GM13976 (cell line): ENCODE measurements at regions of chr20 and their contacts with region 1.

Region 1: DNA sequence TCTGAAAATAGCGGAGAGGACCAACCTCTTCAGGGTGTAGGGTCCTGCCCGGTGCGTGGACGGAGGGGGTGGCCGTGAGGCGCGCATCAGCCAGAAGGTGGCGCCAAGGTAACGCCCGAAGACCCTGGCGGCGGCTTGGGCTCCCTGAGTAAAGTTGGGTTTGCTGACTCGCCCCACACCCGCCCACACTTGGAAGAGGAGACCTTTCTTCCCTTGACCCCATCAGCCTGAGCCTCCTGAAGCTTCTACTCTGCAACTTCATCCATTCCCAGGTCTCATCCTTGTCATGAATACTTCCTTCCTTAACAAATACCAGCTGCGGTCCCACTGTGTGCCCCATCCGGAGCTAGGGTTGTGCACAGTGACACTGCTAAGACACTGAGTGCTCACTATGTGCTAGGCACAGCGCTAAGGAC is 14.6 kb downstream of the CD40 start:
- DNase-seq: peak; percentile 86
- CTCF ChIP-seq: peak; percentile 93

Region 2: GRCh38 chr20:46689082-46689754 is 556.5 kb after region 1 on chr20 and contains the start of gene TP53RK:
- in situ Hi-C with region 1: loop called (anchors 25 kb)
- DNase-seq: peak; percentile 98
- CTCF ChIP-seq: no peak